Breast epithelium (tissue), 4 donors: ENCODE measurements at regions of chr10 and their contacts with region 1.

Region 1: GRCh38 chr10:10903620-10904019 is 114.1 kb upstream of the CELF2 start:
- DNase-seq: no peak
- H3K4me3 ChIP-seq: no peak overlapping the region
- H3K27ac ChIP-seq: no peak overlapping the region
- H3K4me1 ChIP-seq: no peaks in the 10 kb centered on the region
- H3K27me3 ChIP-seq: no peaks in the 10 kb centered on the region
- CTCF ChIP-seq: no peak
- POLR2A ChIP-seq: no peak

Region 2: DNA sequence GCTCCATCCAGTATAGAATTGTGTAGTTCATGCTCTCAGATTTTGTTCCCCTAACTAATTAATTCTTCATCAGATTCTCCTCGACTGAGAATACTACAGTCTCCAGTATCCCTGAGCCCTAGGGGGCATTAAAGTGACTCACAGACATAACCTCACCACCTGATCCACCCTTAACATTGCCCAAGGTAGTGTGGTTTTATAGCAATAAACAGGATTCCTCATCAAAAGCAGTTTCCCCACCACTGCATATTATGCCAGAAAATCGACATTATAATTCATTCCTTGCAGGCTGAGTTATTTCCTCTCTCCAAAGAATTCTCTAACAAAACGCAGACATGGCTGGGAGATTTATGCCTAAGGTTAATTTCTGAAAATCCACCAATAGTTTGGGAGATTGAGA is 1288.4 kb before region 1 on chr10:
- intact Hi-C with region 1: no loop called
- DNase-seq: no peak
- H3K4me3 ChIP-seq: no peak overlapping the region
- H3K27ac ChIP-seq: no peak overlapping the region
- H3K4me1 ChIP-seq: no peaks in the 10 kb centered on the region
- H3K27me3 ChIP-seq: no peaks in the 10 kb centered on the region
- CTCF ChIP-seq: no peak
- POLR2A ChIP-seq: no peak

Region 3: GRCh38 chr10:10083857-10084256 is 819.8 kb before region 1 on chr10:
- intact Hi-C with region 1: loop called (anchors 10 kb)
- DNase-seq: no peak
- H3K4me3 ChIP-seq: no peak overlapping the region
- H3K27ac ChIP-seq: no peak overlapping the region
- H3K4me1 ChIP-seq: no peaks in the 10 kb centered on the region
- H3K27me3 ChIP-seq: no peaks in the 10 kb centered on the region
- CTCF ChIP-seq: no peak
- POLR2A ChIP-seq: no peak

Region 4: GRCh38 chr10:10855151-10855581 is 48.5 kb before region 1 on chr10:
- intact Hi-C with region 1: no loop called
- DNase-seq: no peak
- H3K4me3 ChIP-seq: no peak overlapping the region
- H3K27ac ChIP-seq: no peak overlapping the region
- H3K4me1 ChIP-seq: no peaks in the 10 kb centered on the region
- H3K27me3 ChIP-seq: no peaks in the 10 kb centered on the region
- CTCF ChIP-seq: no peak
- POLR2A ChIP-seq: no peak

Region 5: DNA sequence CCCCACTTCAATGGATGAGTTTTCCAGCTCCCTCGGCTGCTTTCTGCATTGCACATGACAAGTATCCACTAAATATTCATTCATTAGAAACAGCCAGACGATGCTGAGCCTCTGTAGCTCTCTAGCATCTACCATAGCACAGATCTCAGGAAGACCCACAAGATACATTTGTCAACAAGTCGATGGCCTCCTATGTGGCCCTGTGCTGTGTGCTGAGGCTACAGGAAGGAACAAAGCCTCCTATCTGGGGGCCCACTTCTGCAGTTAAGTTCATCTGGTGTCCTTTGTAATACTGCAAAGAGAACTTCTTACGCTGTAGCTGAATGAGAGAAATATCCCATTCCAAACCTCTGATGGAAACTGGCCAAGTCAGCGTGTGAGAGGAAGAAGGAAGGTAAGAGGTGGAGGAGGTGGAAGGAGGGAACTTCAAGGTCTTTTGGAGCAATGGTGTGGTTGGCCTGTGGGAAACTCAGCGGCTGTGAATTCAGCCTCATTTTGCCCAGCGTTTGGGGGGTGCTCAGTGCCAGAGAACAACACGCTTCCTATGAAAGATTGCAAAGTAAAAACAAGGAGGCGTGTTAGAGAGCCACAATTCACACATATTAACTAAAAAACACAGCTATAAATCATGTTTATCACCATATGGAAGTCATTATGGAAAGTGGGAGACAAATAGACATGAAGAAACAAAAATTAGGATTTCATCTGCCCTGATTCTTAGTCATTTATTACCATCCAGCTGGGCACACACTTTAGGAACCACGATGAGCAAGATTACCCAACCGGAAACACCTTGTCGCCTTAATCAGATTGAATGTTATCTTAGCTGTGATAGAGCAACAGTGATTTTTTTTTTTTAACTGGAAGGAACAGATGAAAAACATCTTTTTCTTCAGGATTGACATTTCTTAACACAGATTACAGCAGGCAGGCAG is 770.0 kb after region 1 on chr10:
- intact Hi-C with region 1: no loop called
- DNase-seq: no peak
- H3K4me3 ChIP-seq: no peak overlapping the region
- H3K27ac ChIP-seq: no peak overlapping the region
- H3K4me1 ChIP-seq: no peaks in the 10 kb centered on the region
- H3K27me3 ChIP-seq: no peaks in the 10 kb centered on the region
- CTCF ChIP-seq: no peak
- POLR2A ChIP-seq: no peak